ENCODE measurements at regions of chr16 and their contacts with region 1.

Region 1: GRCh38 chr16:66728117-66728787 is 23.2 kb downstream of the DYNC1LI2 start:
- DNase-seq: no peak
- H3K4me3 Mint-ChIP-seq: no peak overlapping the region
- H3K27ac Mint-ChIP-seq: peak overlapping the region; percentile 67
- H3K4me1 Mint-ChIP-seq: peaks cover 2% of the 10 kb centered on the region
- H3K27me3 Mint-ChIP-seq: no peaks in the 10 kb centered on the region

Region 2: DNA sequence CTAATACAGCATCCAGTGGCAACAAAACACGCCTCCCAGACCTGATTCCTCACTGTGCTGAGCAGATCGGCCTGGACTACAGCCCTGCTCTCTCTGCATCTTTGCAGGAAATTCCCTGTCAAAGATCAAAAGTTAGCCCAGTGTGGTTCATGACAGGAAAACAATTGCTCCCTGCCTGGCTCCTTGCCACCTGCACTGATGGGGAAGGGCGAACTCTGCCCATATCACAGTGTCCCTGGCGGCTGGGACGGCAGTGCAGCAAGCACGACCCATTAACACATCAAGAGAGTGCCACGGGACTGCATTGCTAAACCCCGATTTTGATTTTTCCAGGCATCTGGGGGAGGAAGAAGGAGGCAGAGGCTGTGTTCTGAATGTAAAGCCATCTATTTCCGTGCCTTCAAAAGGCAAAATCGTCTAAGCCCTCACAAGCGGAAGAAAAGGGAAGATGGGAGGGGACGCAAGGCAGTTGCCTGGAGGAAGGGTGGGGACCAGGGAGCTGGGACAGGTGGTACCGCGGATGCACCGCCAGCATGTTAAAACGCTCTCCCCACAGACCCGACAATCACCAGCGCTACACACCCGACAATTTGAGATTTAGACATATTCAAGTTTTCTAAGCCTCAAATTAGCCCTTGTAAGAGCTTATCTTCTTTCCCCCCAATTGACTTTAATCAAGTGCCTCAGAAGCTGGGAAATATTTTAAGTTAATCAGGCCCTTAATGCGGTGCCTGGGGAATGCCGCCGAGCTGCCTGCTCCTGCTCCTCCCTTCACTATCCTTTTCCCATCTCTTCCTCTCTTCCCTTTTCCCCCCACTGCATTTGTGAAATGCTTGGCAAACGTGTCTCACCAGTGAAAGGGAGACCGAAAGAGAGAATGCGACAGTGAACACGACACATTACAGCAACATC is 600.5 kb before region 1 on chr16:
- CTCF ChIA-PET with region 1: no interaction called
- DNase-seq: no peak
- H3K4me3 Mint-ChIP-seq: no peak overlapping the region
- H3K27ac Mint-ChIP-seq: no peak overlapping the region
- H3K4me1 Mint-ChIP-seq: no peaks in the 10 kb centered on the region
- H3K27me3 Mint-ChIP-seq: peaks cover 46% of the 10 kb centered on the region

Region 3: DNA sequence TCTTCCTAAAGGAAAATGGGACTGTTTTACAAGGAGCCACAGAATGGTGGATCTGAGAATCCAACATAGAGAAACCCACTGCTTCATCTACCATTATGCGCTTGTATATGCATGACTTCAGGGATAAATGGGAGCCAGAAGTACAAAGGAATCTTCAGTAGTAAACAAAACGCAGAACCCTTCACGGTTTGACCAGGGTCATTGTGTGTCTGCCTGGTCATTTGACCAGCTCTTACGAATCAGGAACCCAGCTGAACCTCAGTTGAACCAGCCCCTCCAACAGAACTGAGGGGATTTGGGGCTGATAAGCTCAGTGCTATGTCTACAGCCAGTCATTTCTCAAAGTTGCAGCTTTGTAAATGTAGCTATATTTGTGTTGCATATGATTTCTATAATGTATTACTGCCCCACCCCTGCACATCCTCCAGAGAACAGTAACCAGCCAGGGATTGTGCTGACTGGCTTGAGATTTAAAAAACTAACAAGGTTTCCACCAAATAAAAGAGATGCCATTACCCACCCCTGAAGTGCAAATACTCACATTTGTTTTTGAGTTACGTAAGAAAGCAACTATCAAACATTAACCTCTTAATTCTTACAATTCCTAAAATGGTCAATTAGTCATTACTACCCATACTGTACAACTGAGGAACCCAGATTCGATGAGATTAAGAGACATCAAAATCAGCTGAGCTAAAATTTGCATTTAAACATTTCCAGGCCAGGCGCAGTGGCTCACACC is 38.0 kb before region 1 on chr16:
- CTCF ChIA-PET with region 1: no interaction called
- DNase-seq: no peak
- H3K4me3 Mint-ChIP-seq: no peak overlapping the region
- H3K27ac Mint-ChIP-seq: no peak overlapping the region
- H3K4me1 Mint-ChIP-seq: peaks cover 6% of the 10 kb centered on the region
- H3K27me3 Mint-ChIP-seq: peaks cover 30% of the 10 kb centered on the region

Region 4: DNA sequence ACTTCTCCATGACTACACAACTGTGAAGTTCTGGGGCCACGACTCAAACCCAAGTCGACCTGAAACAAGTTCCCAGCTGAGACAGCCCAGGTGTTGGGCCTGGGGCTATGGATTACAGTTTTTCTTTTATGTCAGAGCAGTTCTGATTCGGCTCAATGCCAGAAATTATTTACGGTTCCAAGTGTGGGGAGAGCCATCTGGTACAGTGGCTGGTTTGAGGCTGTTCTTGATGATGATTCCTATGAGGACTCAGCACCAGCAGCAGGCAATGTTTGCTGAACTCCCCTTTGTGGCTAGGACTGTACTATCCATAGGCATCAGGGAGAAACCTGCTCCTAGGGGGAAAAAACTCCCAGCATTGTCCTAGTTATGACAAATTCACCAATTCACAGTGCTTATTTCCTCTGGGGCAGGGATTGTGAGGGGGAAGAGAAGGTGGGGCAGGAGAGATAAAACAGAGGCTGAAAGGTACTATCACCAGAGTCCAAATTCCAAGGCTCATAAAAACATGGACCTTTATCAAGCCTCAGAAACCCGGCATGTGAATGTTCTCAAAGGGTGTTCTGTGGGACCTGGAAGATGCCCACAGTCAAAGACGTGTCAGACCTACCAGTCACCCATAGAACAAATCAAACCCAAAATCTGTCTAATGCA is 13.5 kb before region 1 on chr16:
- CTCF ChIA-PET with region 1: interaction called, 11 read pairs
- DNase-seq: no peak
- H3K4me3 Mint-ChIP-seq: no peak overlapping the region
- H3K27ac Mint-ChIP-seq: no peak overlapping the region
- H3K4me1 Mint-ChIP-seq: no peaks in the 10 kb centered on the region
- H3K27me3 Mint-ChIP-seq: peaks cover 18% of the 10 kb centered on the region

Region 5: GRCh38 chr16:66740010-66740409 is 11.8 kb after region 1 on chr16:
- CTCF ChIA-PET with region 1: interaction called, 85 read pairs
- DNase-seq: peak; percentile 58
- H3K4me3 Mint-ChIP-seq: no peak overlapping the region
- H3K27ac Mint-ChIP-seq: no peak overlapping the region
- H3K4me1 Mint-ChIP-seq: peaks cover 23% of the 10 kb centered on the region
- H3K27me3 Mint-ChIP-seq: no peaks in the 10 kb centered on the region

Region 6: GRCh38 chr16:66751303-66751991 is 23.2 kb after region 1 on chr16 and contains the start of gene DYNC1LI2:
- CTCF ChIA-PET with region 1: interaction called, 15 read pairs
- DNase-seq: peak; percentile 87
- H3K4me3 Mint-ChIP-seq: peak within 1 kb of the TSS; percentile 76
- H3K27ac Mint-ChIP-seq: peak within 1 kb of the TSS; percentile 84
- H3K4me1 Mint-ChIP-seq: peaks cover 45% of the 10 kb centered on the region
- H3K27me3 Mint-ChIP-seq: peaks cover 26% of the 10 kb centered on the region

Region 7: GRCh38 chr16:66801320-66802105 is 73.3 kb after region 1 on chr16 and contains the start of gene TERB1:
- CTCF ChIA-PET with region 1: no interaction called
- DNase-seq: no peak
- H3K4me3 Mint-ChIP-seq: no peak within 1 kb of the TSS
- H3K27ac Mint-ChIP-seq: no peak within 1 kb of the TSS
- H3K4me1 Mint-ChIP-seq: no peaks in the 10 kb centered on the region
- H3K27me3 Mint-ChIP-seq: no peaks in the 10 kb centered on the region

Region 8: GRCh38 chr16:66924527-66925321 is 196.5 kb after region 1 on chr16:
- CTCF ChIA-PET with region 1: interaction called, 10 read pairs
- DNase-seq: peak; percentile 60
- H3K4me3 Mint-ChIP-seq: peak overlapping the region; percentile 18
- H3K27ac Mint-ChIP-seq: no peak overlapping the region
- H3K4me1 Mint-ChIP-seq: peaks cover 19% of the 10 kb centered on the region
- H3K27me3 Mint-ChIP-seq: peaks cover 78% of the 10 kb centered on the region

Measured in activated naive CD4-positive, alpha-beta T cell treated with anti-CD3 and anti-CD28 coated beads, Interleukin-2, amount 10 ng/mL, durations not matched to agents 7 days and 5 days (primary cell).